CD8-positive, alpha-beta T cell (primary cell): ENCODE measurements at regions of chr4 and their contacts with region 1.

Region 1: DNA sequence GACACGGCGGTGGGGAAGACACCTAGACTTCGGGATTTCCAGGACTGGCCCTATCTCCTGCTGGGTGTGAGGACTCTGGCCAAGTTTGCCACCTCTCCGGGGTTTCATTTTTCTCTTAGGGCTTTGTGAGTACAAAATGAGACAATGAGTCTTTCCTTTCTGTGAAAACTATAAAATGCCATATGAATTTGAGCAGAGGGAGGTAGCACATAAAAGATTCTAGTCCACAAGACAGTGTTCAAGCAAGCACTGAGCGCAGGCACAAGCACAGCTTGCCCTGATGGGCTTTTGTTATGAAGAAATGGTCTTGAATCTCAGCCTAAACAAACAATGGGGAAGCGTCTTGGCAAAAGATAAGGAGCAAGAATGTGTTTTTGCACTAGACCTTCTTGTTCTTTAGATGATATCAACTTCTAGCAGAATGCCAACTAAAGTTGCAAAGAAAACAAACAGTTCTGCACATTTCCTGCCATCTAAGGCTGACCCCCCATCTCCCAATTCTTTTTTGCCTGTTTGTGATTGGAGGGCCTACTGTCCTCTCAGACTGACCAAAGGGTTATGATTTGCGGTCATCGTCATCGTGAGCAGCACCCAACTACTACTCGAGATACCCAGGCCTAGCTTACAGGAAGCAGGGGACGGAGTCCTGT is 73.0 kb upstream of the ZNF518B start:
- DNase-seq: no peak
- ATAC-seq: no peak
- H3K4me3 ChIP-seq: no peak overlapping the region
- H3K4me3 Mint-ChIP-seq: no peak overlapping the region
- H3K27ac ChIP-seq: no peak overlapping the region
- H3K27ac Mint-ChIP-seq: no peak overlapping the region
- H3K4me1 ChIP-seq: no peaks in the 10 kb centered on the region
- H3K4me1 Mint-ChIP-seq: no peaks in the 10 kb centered on the region
- H3K27me3 ChIP-seq: no peaks in the 10 kb centered on the region
- H3K27me3 Mint-ChIP-seq: no peaks in the 10 kb centered on the region
- CTCF ChIP-seq: no peak

Region 2: GRCh38 chr4:10025230-10025806 is 504.9 kb before region 1 on chr4:
- CTCF ChIA-PET with region 1: no interaction called
- POLR2A ChIA-PET with region 1: no interaction called
- intact Hi-C with region 1: no loop called
- DNase-seq: no peak
- ATAC-seq: no peak
- H3K4me3 ChIP-seq: no peak overlapping the region
- H3K4me3 Mint-ChIP-seq: no peak overlapping the region
- H3K27ac ChIP-seq: no peak overlapping the region
- H3K27ac Mint-ChIP-seq: no peak overlapping the region
- H3K4me1 ChIP-seq: no peaks in the 10 kb centered on the region
- H3K4me1 Mint-ChIP-seq: no peaks in the 10 kb centered on the region
- H3K27me3 ChIP-seq: no peaks in the 10 kb centered on the region
- H3K27me3 Mint-ChIP-seq: peaks cover 6% of the 10 kb centered on the region
- CTCF ChIP-seq: no peak

Region 3: DNA sequence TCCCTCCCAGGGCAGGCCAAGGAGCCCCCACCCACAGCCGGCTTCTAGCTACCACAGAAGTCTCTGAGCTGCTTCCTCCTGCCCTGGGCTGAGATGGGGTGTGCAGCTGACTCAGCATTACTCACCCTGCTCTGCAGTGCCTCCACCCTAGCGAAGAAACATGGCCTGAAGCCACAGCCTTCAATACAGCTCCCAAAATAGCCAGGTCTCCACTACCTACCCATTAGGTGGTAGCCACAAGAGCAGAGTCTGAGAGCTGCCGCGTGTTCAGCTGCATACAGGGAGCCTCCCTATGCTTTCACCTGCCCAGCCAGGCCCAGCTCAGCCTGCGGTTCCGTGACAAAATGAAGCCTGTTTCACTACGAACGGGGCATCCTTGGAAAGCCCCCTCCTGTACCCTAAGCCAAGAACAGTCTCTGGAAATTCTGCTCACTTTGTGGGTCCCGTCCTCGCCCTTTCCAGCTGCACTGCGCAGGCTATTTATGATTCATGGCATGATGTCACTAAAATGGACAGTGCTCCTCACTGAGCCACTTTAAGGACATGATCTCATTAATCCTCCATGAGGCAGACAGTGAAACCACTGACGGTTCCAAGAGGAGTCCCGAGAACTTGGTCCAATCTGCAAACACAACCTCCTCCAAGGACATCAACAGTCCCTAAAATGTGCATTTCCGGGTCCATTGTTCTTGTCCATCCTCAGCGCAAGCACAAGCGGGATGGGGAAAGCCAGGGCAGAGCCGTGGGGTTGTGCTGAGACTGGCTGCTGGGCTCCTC is 433.9 kb before region 1 on chr4:
- CTCF ChIA-PET with region 1: no interaction called
- POLR2A ChIA-PET with region 1: no interaction called
- intact Hi-C with region 1: loop called in 1 of 2 experiments (anchors 10 kb)
- DNase-seq: peak; percentile 46 to 90 (median 83)
- ATAC-seq: peak; percentile 75
- H3K4me3 ChIP-seq: no peak overlapping the region
- H3K4me3 Mint-ChIP-seq: peak overlapping the region; percentile 37
- H3K27ac ChIP-seq: peak overlapping the region; percentile 38 to 70
- H3K27ac Mint-ChIP-seq: peak overlapping the region; percentile 87
- H3K4me1 ChIP-seq: peaks cover 94% of the 10 kb centered on the region
- H3K4me1 Mint-ChIP-seq: peaks cover 94% of the 10 kb centered on the region
- H3K27me3 ChIP-seq: no peaks in the 10 kb centered on the region
- H3K27me3 Mint-ChIP-seq: no peaks in the 10 kb centered on the region
- CTCF ChIP-seq: no peak

Region 4: DNA sequence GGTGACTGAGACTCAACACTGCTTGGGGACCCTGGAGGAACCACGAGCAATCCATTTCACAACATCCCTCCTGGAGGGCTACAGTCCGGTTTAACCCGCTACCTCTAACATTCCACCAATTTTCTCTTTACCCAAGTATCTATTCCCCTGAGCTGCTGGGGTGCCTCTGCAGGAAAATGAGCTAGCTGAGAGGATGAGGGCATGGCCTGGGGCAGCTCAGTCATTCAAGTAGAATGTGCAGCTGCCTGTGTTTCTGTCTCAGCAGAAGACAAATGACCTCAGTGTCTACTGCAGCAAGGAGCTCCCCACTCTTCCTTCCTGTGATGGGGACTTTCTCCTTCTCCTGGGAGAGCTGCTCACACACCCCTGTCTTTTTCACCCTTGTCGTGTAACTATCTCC is 193.8 kb before region 1 on chr4:
- CTCF ChIA-PET with region 1: no interaction called
- POLR2A ChIA-PET with region 1: no interaction called
- intact Hi-C with region 1: loop called in 1 of 2 experiments (anchors 10 kb)
- DNase-seq: no peak
- ATAC-seq: no peak
- H3K4me3 ChIP-seq: no peak overlapping the region
- H3K4me3 Mint-ChIP-seq: no peak overlapping the region
- H3K27ac ChIP-seq: no peak overlapping the region
- H3K27ac Mint-ChIP-seq: no peak overlapping the region
- H3K4me1 ChIP-seq: no peaks in the 10 kb centered on the region
- H3K4me1 Mint-ChIP-seq: no peaks in the 10 kb centered on the region
- H3K27me3 ChIP-seq: no peaks in the 10 kb centered on the region
- H3K27me3 Mint-ChIP-seq: peaks cover 32% of the 10 kb centered on the region
- CTCF ChIP-seq: no peak